Natural killer cell (primary cell): ENCODE measurements at regions of chr10 and their contacts with region 1.

Region 1: DNA sequence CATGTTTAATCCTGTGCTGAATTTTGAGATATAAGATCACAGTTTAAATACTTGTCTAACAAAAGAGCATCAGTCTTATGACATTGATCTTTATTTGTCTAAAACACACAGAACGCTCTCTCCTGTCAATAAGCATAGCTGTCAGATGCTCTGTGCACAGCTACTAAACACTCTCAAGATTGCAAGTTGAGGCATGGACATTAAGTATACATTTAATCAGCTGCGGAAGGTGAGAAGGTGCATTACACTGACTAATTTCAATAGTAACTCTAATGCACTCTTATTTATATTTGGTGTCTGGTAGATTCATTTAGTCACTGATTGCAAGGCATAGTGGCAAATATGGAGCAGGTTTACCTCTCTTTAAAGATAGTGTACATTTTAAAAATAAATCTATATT is 580.3 kb upstream of the NRP1 start:
- DNase-seq: no peak
- ATAC-seq: no peak
- H3K4me3 ChIP-seq: no peak overlapping the region
- H3K4me3 Mint-ChIP-seq: no peak overlapping the region
- H3K27ac ChIP-seq: no peak overlapping the region
- H3K27ac Mint-ChIP-seq: no peak overlapping the region
- H3K4me1 ChIP-seq: no peaks in the 10 kb centered on the region
- H3K4me1 Mint-ChIP-seq: no peaks in the 10 kb centered on the region
- H3K27me3 ChIP-seq: no peaks in the 10 kb centered on the region
- H3K27me3 Mint-ChIP-seq: peaks cover 10 to 31% of the 10 kb centered on the region in 2 donors
- CTCF ChIP-seq: no peak

Region 2: DNA sequence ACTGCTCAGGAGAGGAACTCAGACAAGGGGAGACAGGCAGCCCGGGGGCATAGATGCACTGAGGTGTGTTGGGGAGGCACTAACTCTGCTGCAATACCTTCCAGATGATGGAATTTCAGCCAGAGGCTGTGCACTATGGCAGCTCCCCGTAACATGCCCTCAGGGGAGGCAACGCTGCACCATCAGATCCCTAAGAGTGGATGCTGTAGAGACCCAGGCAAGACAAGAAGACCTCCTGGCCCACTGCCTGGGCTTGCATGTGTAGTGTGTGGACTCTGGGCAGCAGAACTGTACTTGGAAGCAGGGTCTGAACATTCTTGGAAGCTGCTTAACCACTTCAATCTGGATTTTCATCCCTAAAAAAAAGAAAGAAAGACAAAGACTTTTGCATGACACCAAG is 282.8 kb before region 1 on chr10:
- intact Hi-C with region 1: no loop called
- DNase-seq: no peak
- ATAC-seq: no peak
- H3K4me3 ChIP-seq: no peak overlapping the region
- H3K4me3 Mint-ChIP-seq: no peak overlapping the region
- H3K27ac ChIP-seq: no peak overlapping the region
- H3K27ac Mint-ChIP-seq: no peak overlapping the region
- H3K4me1 ChIP-seq: no peaks in the 10 kb centered on the region
- H3K4me1 Mint-ChIP-seq: no peaks in the 10 kb centered on the region
- H3K27me3 ChIP-seq: no peaks in the 10 kb centered on the region
- H3K27me3 Mint-ChIP-seq: peaks cover 11 to 24% of the 10 kb centered on the region in 2 donors
- CTCF ChIP-seq: no peak

Region 3: DNA sequence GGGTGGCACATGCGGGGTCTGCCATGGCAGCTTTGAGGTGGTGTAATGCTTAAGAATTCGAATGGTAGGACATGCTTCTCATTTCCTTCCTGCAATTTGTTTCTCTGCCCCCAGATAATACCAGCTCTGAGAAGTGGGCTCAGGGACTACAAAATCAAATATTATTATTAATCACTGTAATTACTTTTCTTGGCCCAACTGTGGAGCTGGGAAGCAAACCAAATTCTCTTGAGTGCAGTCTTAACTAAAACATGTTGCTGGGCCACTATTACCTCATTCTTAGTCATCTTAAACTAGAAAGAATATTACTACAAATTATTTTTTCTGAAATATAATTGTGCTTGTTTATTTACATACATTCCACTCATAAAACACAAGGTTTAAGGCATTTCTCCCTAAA is 13.6 kb before region 1 on chr10:
- intact Hi-C with region 1: loop called (anchors 1 kb)
- DNase-seq: no peak
- ATAC-seq: no peak
- H3K4me3 ChIP-seq: no peak overlapping the region
- H3K4me3 Mint-ChIP-seq: no peak overlapping the region
- H3K27ac ChIP-seq: no peak overlapping the region
- H3K27ac Mint-ChIP-seq: no peak overlapping the region
- H3K4me1 ChIP-seq: no peaks in the 10 kb centered on the region
- H3K4me1 Mint-ChIP-seq: no peaks in the 10 kb centered on the region
- H3K27me3 ChIP-seq: no peaks in the 10 kb centered on the region
- H3K27me3 Mint-ChIP-seq: peaks cover 8 to 27% of the 10 kb centered on the region in 2 donors
- CTCF ChIP-seq: no peak